Activated B cell treated with CpG ODN at 0.5 μM for 24 hours (primary cell): ENCODE measurements at regions of chr10 and their contacts with region 1.

Region 1: GRCh38 chr10:6401562-6402348 is 178.3 kb downstream of the PRKCQ start:
- DNase-seq: no peak
- ATAC-seq: peak; percentile 93
- H3K4me3 Mint-ChIP-seq: peak overlapping the region; percentile 75
- H3K27ac Mint-ChIP-seq: no peak overlapping the region
- H3K4me1 Mint-ChIP-seq: peaks cover 33% of the 10 kb centered on the region
- H3K27me3 Mint-ChIP-seq: peaks cover 6% of the 10 kb centered on the region
- CTCF ChIP-seq: peak; percentile 57

Region 2: GRCh38 chr10:6014241-6014761 is 387.5 kb before region 1 on chr10:
- CTCF ChIA-PET with region 1: interaction called, 14 read pairs
- POLR2A ChIA-PET with region 1: interaction called, 4 read pairs
- intact Hi-C with region 1: loop called (anchors 1 kb)
- DNase-seq: no peak
- ATAC-seq: peak; percentile 66
- H3K4me3 Mint-ChIP-seq: no peak overlapping the region
- H3K27ac Mint-ChIP-seq: peak overlapping the region; percentile 78
- H3K4me1 Mint-ChIP-seq: peaks cover 22% of the 10 kb centered on the region
- H3K27me3 Mint-ChIP-seq: no peaks in the 10 kb centered on the region
- CTCF ChIP-seq: no peak

Region 3: GRCh38 chr10:6074489-6075301 is 327.1 kb before region 1 on chr10:
- CTCF ChIA-PET with region 1: no interaction called
- POLR2A ChIA-PET with region 1: no interaction called
- intact Hi-C with region 1: no loop called
- DNase-seq: no peak
- ATAC-seq: no peak
- H3K4me3 Mint-ChIP-seq: no peak overlapping the region
- H3K27ac Mint-ChIP-seq: no peak overlapping the region
- H3K4me1 Mint-ChIP-seq: peaks cover 50% of the 10 kb centered on the region
- H3K27me3 Mint-ChIP-seq: no peaks in the 10 kb centered on the region
- CTCF ChIP-seq: no peak

Region 4: GRCh38 chr10:6136215-6137201 is 265.2 kb before region 1 on chr10:
- CTCF ChIA-PET with region 1: interaction called, 10 read pairs
- POLR2A ChIA-PET with region 1: no interaction called
- intact Hi-C with region 1: loop called (anchors 1 kb)
- DNase-seq: no peak
- ATAC-seq: peak; percentile 29
- H3K4me3 Mint-ChIP-seq: peak overlapping the region; percentile 13
- H3K27ac Mint-ChIP-seq: peak overlapping the region; percentile 59
- H3K4me1 Mint-ChIP-seq: peaks cover 36% of the 10 kb centered on the region
- H3K27me3 Mint-ChIP-seq: peaks cover 9% of the 10 kb centered on the region
- CTCF ChIP-seq: no peak

Region 5: GRCh38 chr10:6163364-6164270 is 238.1 kb before region 1 on chr10:
- CTCF ChIA-PET with region 1: interaction called, 7 read pairs
- POLR2A ChIA-PET with region 1: interaction called, 15 read pairs
- intact Hi-C with region 1: no loop called
- DNase-seq: peak; percentile 90
- ATAC-seq: peak; percentile 98
- H3K4me3 Mint-ChIP-seq: peak overlapping the region; percentile 96
- H3K27ac Mint-ChIP-seq: peak overlapping the region; percentile 97
- H3K4me1 Mint-ChIP-seq: peaks cover 34% of the 10 kb centered on the region
- H3K27me3 Mint-ChIP-seq: no peaks in the 10 kb centered on the region
- CTCF ChIP-seq: no peak

Region 6: DNA sequence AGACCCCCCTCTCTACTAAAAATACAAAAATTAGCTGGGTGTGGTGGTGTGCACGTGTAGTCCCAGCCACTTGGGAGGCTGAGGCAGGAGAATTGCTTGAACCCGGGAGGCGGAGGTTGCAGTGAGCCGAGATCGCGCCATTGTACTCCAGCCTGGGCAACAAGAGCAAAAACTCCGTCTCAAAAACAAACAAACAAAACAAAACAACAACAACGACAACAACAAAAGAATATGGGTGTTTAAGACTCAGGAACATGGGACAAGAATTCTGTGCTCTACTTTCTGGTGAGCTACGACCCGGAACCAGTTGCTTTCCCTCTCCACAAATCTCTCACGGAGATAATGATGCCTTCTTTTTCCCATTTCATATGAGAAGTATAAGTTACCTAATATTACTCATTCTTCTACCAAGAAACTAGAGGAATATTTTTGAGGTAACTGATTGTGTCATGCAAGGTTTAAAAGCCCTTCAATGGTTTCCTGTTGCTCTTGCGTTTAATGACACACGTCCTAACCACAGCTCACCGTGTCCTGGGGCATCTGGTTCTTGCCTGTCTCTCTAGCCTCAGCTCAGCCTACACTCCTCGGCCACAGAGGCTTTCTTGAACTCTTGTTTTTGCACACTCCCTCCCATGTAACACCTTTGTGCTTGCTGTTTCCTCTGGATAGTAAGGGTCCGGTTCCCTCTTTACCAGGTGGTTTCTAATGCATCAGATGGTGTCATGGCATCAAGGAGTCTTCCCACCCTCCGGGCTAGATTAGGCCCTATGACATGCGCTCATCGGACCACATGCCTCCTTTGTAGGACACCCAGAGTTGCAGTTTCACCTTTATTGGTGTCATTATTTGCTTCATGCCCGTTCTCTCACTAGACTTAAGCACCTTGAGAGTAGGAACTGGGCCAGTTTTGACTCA is 131.5 kb before region 1 on chr10:
- CTCF ChIA-PET with region 1: interaction called, 9 read pairs
- POLR2A ChIA-PET with region 1: interaction called, 7 read pairs
- intact Hi-C with region 1: loop called (anchors 2 kb)
- DNase-seq: peak; percentile 19
- ATAC-seq: peak; percentile 49
- H3K4me3 Mint-ChIP-seq: peak overlapping the region; percentile 24
- H3K27ac Mint-ChIP-seq: peak overlapping the region; percentile 73
- H3K4me1 Mint-ChIP-seq: peaks cover 35% of the 10 kb centered on the region
- H3K27me3 Mint-ChIP-seq: no peaks in the 10 kb centered on the region
- CTCF ChIP-seq: no peak

Region 7: DNA sequence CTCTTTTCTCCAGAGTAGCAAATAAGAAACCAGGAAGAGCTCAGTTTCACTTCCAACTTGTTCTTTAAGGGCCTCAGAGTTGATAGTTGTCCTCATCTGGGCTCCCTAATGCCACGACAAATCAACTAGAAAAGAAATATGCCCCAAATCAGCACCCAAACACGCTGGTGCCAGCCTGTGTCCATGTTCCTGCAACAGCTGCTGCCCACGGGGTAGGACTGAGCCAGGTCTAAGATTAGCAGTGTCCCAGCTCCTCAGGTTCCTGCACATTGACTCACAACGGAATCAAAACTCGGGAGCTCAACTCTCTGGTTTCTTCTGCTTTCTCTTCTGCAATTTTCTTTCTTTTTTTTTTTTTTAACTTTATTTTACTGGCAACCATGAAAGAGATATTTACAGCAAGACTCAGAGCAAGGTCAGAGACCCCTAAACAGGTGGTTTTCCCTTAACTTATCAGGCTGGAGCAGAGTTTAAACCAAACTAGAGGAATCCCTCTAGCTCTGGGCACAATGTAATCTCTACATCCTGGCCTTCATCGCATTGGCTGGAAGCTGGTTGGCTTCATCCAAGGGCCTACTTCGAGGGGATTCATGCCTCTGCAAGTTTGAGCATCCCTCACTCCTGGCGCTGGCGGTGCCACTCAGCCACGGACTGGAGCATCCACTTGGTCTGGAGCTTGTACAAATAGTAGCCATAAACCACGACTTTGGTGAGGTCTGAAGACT is 72.9 kb before region 1 on chr10:
- CTCF ChIA-PET with region 1: interaction called, 11 read pairs
- POLR2A ChIA-PET with region 1: no interaction called
- intact Hi-C with region 1: no loop called
- DNase-seq: peak; percentile 32
- ATAC-seq: peak; percentile 73
- H3K4me3 Mint-ChIP-seq: peak overlapping the region; percentile 61
- H3K27ac Mint-ChIP-seq: peak overlapping the region; percentile 80
- H3K4me1 Mint-ChIP-seq: peaks cover 27% of the 10 kb centered on the region
- H3K27me3 Mint-ChIP-seq: no peaks in the 10 kb centered on the region
- CTCF ChIP-seq: no peak

Region 8: GRCh38 chr10:7818295-7819122 is 1416.8 kb after region 1 on chr10 and contains the start of gene TAF3:
- CTCF ChIA-PET with region 1: no interaction called
- POLR2A ChIA-PET with region 1: no interaction called
- intact Hi-C with region 1: loop called (anchors 10 kb)
- DNase-seq: peak; percentile 90
- ATAC-seq: peak; percentile 93
- H3K4me3 Mint-ChIP-seq: peak within 1 kb of the TSS; percentile 100
- H3K27ac Mint-ChIP-seq: peak within 1 kb of the TSS; percentile 87
- H3K4me1 Mint-ChIP-seq: peaks cover 27% of the 10 kb centered on the region
- H3K27me3 Mint-ChIP-seq: peaks cover 4% of the 10 kb centered on the region
- CTCF ChIP-seq: no peak
- total RNA-seq, gene TAF3: 12.4 and 12.6 TPM in 2 replicates